HCT116 (cell line): ENCODE measurements at regions of chr10 and their contacts with region 1.

Region 1: GRCh38 chr10:2202401-2202800 is 465.1 kb upstream of the ADARB2 start:
- DNase-seq: no peak
- ATAC-seq: no peak
- H3K4me3 ChIP-seq: no peak overlapping the region
- H3K27ac ChIP-seq: no peak overlapping the region
- H3K4me1 ChIP-seq: no peaks in the 10 kb centered on the region
- H3K27me3 ChIP-seq: no peaks in the 10 kb centered on the region
- CTCF ChIP-seq: no peak
- POLR2A ChIP-seq: no peak
- RAD21 ChIP-seq: no peak

Region 2: GRCh38 chr10:2214035-2214434 is 11.6 kb after region 1 on chr10:
- CTCF ChIA-PET with region 1: no interaction called
- POLR2A ChIA-PET with region 1: no interaction called
- RAD21 ChIA-PET with region 1: no interaction called
- intact Hi-C with region 1: no loop called
- DNase-seq: no peak
- ATAC-seq: no peak
- H3K4me3 ChIP-seq: no peak overlapping the region
- H3K27ac ChIP-seq: no peak overlapping the region
- H3K4me1 ChIP-seq: no peaks in the 10 kb centered on the region
- H3K27me3 ChIP-seq: no peaks in the 10 kb centered on the region
- CTCF ChIP-seq: no peak
- POLR2A ChIP-seq: no peak
- RAD21 ChIP-seq: no peak

Region 3: DNA sequence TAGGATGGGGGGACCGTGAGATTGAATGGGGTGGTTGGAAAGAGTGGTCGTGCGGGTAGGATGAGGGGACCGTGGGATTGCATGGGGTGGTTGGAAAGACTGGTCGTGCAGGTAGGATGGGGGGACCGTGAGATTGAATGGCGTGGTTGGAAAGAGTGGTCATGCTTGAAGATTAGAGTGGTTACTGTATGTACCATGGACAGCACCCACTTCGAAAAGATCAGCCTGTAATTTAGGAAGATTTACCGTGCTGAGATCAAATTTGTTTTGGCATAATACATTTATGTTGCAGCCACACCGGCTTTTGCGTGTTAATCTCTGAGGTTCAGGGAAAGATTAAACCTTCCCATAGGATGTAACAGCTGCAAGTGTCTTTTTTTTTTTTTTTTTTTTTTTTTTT is 30.1 kb after region 1 on chr10:
- CTCF ChIA-PET with region 1: no interaction called
- POLR2A ChIA-PET with region 1: no interaction called
- RAD21 ChIA-PET with region 1: no interaction called
- intact Hi-C with region 1: loop called (anchors 1 kb)
- DNase-seq: no peak
- ATAC-seq: no peak
- H3K4me3 ChIP-seq: no peak overlapping the region
- H3K27ac ChIP-seq: no peak overlapping the region
- H3K4me1 ChIP-seq: no peaks in the 10 kb centered on the region
- H3K27me3 ChIP-seq: no peaks in the 10 kb centered on the region
- CTCF ChIP-seq: no peak
- POLR2A ChIP-seq: no peak
- RAD21 ChIP-seq: no peak